Activated CD4-positive, alpha-beta T cell treated with anti-CD3 and anti-CD28 coated beads, Interleukin-2, amount 10 ng/mL, durations not matched to agents 7 days and 5 days (primary cell): ENCODE measurements at regions of chr5 and their contacts with region 1.

Region 1: GRCh38 chr5:173804579-173805230 is 83.4 kb upstream of the CPEB4 start:
- DNase-seq: no peak
- H3K4me3 Mint-ChIP-seq: no peak overlapping the region
- H3K27ac Mint-ChIP-seq: no peak overlapping the region
- H3K4me1 Mint-ChIP-seq: no peaks in the 10 kb centered on the region
- H3K27me3 Mint-ChIP-seq: no peaks in the 10 kb centered on the region

Region 2: DNA sequence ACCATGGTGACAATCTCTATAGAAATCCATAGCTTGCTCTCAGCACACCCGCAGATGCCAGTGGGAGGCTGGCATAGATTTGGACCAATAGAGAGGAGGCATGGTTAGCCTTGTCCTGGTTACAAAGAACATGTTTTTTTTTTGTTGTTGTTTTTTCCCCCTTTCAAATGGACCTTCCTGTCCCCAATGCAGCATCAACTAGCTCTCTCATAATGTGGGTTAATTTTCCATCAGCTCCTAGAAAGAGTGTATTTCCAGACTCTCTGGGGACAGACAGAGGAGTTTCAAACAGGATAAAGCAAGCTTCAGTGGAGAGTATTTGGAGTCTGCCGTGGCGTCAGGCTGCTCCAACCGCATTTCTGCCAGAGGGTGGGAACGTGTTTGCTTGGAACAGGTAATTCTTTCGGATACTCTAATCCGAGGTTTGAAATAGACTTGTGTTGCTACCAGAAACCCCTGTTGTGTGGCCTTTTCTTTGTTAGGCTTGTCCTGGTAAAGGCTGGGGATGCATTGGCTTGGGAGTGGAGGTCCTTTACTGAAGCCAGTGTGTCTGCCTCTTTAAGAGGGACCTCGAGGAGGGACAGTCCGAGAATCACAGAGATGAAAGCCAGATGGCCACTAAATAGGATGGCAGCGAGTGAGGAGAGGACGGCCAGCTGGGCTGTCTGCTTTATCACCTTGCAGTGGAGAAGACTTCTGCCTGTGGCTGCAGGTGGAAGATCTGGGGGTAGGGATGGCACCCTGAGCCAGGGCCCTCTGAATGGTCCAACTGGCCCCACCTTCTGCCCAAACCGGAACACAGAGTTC is 47.1 kb before region 1 on chr5:
- CTCF ChIA-PET with region 1: no interaction called
- POLR2A ChIA-PET with region 1: interaction called, 10 read pairs
- DNase-seq: no peak
- H3K4me3 Mint-ChIP-seq: no peak overlapping the region
- H3K27ac Mint-ChIP-seq: no peak overlapping the region
- H3K4me1 Mint-ChIP-seq: no peaks in the 10 kb centered on the region
- H3K27me3 Mint-ChIP-seq: peaks cover 3% of the 10 kb centered on the region